KBM-7 (cell line): ENCODE measurements at regions of chr5 and their contacts with region 1.

Region 1: DNA sequence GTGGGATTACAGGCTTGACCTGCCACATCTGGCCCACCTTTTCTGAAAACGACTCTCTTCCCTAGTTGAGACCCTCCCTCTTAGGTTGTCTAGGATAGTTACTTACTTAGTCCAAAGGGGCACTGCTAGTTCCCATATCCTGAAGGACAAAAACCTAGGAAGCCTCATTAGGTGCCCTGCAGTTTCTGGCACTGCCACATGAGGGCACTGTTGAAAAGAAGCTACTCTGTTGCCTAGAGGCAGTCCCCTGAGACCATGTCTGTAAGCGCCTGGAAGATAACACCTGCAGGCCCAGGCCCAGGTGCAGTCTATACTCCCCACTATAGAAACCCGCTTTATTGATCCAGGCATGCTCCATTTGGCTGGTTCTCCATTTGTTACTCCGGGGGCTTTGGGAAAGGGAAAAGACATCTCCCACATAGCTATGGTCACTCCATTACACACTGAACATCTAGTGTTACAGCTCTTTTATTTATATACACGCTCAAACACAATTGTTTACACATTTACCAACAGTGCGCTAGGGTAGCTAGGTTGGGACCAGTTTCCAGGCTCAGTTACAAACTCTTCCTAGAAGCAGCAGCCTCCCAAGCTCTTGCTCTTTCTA is 73.4 kb upstream of the PPARGC1B start:
- DNase-seq: peak; percentile 55

Region 2: DNA sequence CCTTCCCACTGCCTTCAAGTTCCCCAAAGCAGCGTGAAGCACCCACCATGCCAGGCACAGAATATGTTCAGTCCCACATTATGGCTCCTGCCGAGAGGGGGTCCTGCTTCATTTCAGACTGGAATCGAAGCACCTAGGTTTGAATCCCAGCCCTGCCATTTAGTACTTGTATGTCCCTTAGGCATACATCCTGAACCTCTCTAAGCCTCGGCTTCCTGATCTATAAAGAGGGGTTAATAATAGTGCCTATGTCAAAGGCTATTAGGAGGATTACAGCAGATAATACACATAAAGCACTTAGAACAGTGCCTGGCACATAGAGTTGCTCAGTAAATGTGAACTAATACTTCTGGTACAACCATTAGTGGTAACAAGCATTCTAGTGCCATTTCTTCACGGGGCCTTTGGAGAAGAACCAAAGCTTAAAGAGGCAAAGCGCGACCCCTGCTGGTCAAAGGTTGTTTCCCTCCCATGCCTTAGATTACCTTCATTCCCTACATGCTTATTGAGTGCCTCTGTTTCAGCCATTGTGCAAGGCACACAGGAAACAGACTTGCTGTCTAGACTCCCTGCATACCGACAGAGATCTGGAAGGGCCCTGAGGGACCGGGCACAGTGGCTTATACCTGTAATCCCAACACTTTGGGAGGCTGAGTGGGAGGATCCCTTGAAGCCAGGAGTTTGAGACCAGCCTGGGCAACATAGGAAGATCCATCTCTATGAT is 171.6 kb after region 1 on chr5:
- in situ Hi-C with region 1: loop called (anchors 10 kb)
- DNase-seq: peak; percentile 94

Region 3: GRCh38 chr5:149887622-149888183 is 231.0 kb after region 1 on chr5:
- in situ Hi-C with region 1: no loop called
- DNase-seq: peak; percentile 78